Transverse colon (tissue), 4 donors: ENCODE measurements at regions of chr13 and their contacts with region 1.

Region 1: GRCh38 chr13:25494698-25495411 is 123.1 kb downstream of the ATP8A2 start:
- DNase-seq: no peak
- H3K4me3 ChIP-seq: no peak overlapping the region
- H3K27ac ChIP-seq: no peak overlapping the region
- H3K4me1 ChIP-seq: no peaks in the 10 kb centered on the region
- H3K27me3 ChIP-seq: no peaks in the 10 kb centered on the region
- CTCF ChIP-seq: no peak
- EP300 ChIP-seq: no peak
- POLR2A ChIP-seq: no peak

Region 2: GRCh38 chr13:24834902-24835510 is 659.8 kb before region 1 on chr13:
- in situ Hi-C with region 1: no loop called
- intact Hi-C with region 1: loop called (anchors 5 kb)
- DNase-seq: peak; percentile 11
- H3K4me3 ChIP-seq: no peak overlapping the region
- H3K27ac ChIP-seq: no peak overlapping the region
- H3K4me1 ChIP-seq: no peaks in the 10 kb centered on the region
- H3K27me3 ChIP-seq: no peaks in the 10 kb centered on the region
- CTCF ChIP-seq: no peak
- EP300 ChIP-seq: no peak
- POLR2A ChIP-seq: no peak

Region 3: DNA sequence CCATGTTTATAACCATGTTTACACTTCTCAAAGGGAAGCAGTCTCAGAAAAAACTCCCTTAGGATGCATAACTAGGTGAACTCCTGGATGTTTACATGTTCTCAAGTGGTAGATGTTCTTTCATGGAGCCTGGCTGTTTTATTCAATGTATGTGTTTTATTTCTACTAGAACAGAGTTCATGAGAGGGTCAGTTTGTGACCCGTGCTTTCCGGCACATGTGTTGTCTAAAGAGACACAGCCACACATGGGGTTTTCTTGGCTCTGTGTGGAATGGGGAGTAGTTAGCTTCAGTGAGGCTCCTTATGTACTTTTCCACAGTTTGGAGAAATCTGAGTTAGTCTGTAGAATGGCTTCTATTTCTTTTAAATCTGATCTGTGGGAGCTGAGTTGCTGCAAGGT is 62.2 kb before region 1 on chr13:
- in situ Hi-C with region 1: no loop called
- intact Hi-C with region 1: no loop called
- DNase-seq: no peak
- H3K4me3 ChIP-seq: no peak overlapping the region
- H3K27ac ChIP-seq: peak overlapping the region in 1 of 4 donors; percentile 30
- H3K4me1 ChIP-seq: no peaks in the 10 kb centered on the region
- H3K27me3 ChIP-seq: no peaks in the 10 kb centered on the region
- CTCF ChIP-seq: no peak
- EP300 ChIP-seq: no peak
- POLR2A ChIP-seq: no peak

Region 4: GRCh38 chr13:25630329-25630900 is 135.6 kb after region 1 on chr13:
- in situ Hi-C with region 1: no loop called
- intact Hi-C with region 1: no loop called
- DNase-seq: no peak
- H3K4me3 ChIP-seq: no peak overlapping the region
- H3K27ac ChIP-seq: no peak overlapping the region
- H3K4me1 ChIP-seq: no peaks in the 10 kb centered on the region
- H3K27me3 ChIP-seq: no peaks in the 10 kb centered on the region
- CTCF ChIP-seq: no peak
- EP300 ChIP-seq: no peak
- POLR2A ChIP-seq: no peak